SK-N-SH (cell line): ENCODE measurements at regions of chr4 and their contacts with region 1.

Region 1: GRCh38 chr4:158667651-158668198 is 4.0 kb downstream of the C4orf46 start:
- DNase-seq: peak; percentile 74
- H3K4me3 ChIP-seq: peak overlapping the region in 1 of 2 experiments; percentile 43; a peak in 1 of 4 replicates
- H3K27ac ChIP-seq: no peak overlapping the region; a peak in 1 of 4 replicates
- H3K4me1 ChIP-seq: peaks cover 8 to 16% of the 10 kb centered on the region in 2 experiments; a peak in 3 of 4 replicates
- H3K27me3 ChIP-seq: no peaks in the 10 kb centered on the region
- CTCF ChIP-seq: peak; percentile 71
- EP300 ChIP-seq: no peak
- RAD21 ChIP-seq: peak; percentile 53

Region 2: DNA sequence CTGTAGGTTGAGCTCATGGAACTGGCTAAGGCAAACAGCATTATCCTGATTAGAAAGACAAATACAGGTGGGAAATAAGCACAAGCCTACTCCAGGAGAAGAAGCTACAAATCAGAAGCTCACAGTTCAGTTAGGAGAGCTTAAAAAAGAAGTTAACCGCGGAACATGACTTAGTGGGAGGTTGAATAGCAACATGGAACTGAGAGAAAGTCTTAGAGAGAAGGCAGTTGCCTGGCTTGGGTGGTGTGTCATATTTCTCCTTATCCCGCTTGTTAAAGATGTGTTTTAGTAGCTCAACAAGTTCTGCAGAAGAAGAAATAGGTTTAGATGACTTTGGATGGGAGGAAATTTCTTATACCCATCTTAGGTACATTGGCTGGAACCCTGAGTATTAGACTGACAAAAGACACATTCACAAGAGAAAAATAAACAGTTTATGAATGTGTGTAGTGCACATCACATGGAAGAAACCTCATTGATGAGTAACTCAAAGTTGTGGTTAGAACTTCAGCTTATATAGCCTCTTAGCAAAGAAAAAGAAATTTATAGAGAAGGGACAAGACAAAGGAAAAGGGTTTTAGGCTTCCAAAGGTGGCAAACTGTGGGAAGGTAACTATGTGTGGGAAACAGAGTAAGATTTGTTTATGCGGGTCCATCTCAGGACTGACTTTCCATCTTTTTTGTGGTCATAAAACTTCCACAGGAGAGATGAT is 183.4 kb before region 1 on chr4:
- CTCF ChIA-PET with region 1: no interaction called
- POLR2A ChIA-PET with region 1: no interaction called
- DNase-seq: no peak
- H3K4me3 ChIP-seq: no peak overlapping the region
- H3K27ac ChIP-seq: no peak overlapping the region
- H3K4me1 ChIP-seq: no peaks in the 10 kb centered on the region
- H3K27me3 ChIP-seq: no peaks in the 10 kb centered on the region
- CTCF ChIP-seq: no peak
- EP300 ChIP-seq: no peak
- RAD21 ChIP-seq: no peak

Region 3: DNA sequence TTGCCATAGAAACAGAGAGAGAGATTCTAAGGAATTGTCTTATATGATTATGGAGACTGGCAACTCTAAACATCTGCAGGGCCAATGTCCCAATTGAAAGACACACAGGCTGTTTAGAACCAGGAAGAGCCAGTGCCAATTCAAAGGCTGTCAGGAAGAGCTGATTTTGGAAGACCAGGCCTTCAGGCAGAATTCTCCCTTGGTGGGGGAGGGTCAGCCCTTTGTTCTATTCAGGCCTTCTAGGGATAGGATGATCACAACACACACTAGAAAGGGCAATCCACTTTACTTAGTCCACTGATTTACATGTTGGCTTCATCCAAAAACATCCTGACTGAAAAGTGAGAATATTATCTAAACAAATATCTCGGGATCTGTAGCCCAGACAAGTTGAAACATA is 11.3 kb before region 1 on chr4:
- CTCF ChIA-PET with region 1: interaction called, 19 read pairs
- POLR2A ChIA-PET with region 1: no interaction called
- DNase-seq: no peak
- H3K4me3 ChIP-seq: no peak overlapping the region
- H3K27ac ChIP-seq: no peak overlapping the region
- H3K4me1 ChIP-seq: no peaks in the 10 kb centered on the region
- H3K27me3 ChIP-seq: no peaks in the 10 kb centered on the region
- CTCF ChIP-seq: no peak
- EP300 ChIP-seq: no peak
- RAD21 ChIP-seq: no peak